Activated CD4-positive, alpha-beta T cell treated with anti-CD3 and anti-CD28 coated beads, Interleukin-2, amount 10 ng/mL, durations not matched to agents 24 days and 14 days (primary cell): ENCODE measurements at regions of chr4 and their contacts with region 1.

Region 1: DNA sequence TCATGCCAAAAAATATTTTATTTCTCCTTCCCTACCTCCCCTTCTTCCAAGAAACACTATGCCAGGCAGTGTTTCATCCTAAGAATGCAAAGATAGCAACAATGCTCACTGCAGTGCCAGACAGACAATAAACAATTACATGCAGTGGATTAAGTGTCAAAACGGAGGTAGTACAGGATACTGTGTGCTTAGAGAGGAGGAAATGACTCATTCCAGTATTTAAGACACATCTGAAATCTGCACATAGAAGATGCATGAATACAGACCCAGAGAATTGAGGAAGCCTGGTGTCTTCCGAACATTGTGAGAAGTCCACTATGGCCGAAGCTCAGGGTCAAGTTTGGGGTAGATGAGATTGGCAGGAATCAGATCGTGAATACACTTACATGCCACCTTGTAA is 326.4 kb downstream of the PPP3CA start:
- DNase-seq: peak; percentile 77
- H3K4me3 Mint-ChIP-seq: peak overlapping the region; percentile 66
- H3K27ac Mint-ChIP-seq: peak overlapping the region; percentile 82
- H3K4me1 Mint-ChIP-seq: peaks cover 42% of the 10 kb centered on the region
- H3K27me3 Mint-ChIP-seq: no peaks in the 10 kb centered on the region

Region 2: DNA sequence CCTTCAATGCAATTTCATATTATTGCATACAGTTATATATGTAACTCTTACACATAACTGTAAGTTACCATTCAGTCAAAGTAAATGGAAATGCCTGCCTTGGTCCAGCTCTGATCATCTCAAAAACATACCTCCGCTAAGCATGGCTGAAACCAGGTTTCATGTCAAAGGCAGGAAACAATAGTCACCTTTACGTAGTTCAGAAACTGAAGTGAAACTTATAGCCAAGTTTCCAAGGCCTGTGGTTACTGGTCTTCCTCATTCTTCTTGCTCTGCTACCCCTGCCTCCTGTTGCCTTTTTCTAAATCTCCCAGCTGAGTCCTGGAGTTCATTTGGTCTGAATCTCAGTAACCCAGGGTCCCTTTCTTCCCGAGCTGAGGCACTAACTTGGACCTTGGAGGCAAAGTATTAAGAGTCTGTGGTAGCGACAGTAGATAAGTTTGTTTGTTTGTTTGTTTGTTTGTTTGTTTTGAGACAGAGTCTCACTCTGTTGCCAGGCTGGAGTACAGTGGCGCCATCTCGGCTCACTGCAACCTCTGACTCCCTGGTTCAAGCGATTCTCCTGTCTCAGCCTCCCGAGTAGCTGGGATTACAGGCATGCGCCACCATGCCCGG is 1173.5 kb before region 1 on chr4:
- intact Hi-C with region 1: loop called (anchors 5 kb)
- DNase-seq: peak; percentile 84
- H3K4me3 Mint-ChIP-seq: peak overlapping the region; percentile 58
- H3K27ac Mint-ChIP-seq: peak overlapping the region; percentile 92
- H3K4me1 Mint-ChIP-seq: peaks cover 67% of the 10 kb centered on the region
- H3K27me3 Mint-ChIP-seq: no peaks in the 10 kb centered on the region

Region 3: GRCh38 chr4:100823066-100823992 is 197.6 kb before region 1 on chr4:
- intact Hi-C with region 1: loop called (anchors 5 kb)
- DNase-seq: peak; percentile 65
- H3K4me3 Mint-ChIP-seq: no peak overlapping the region
- H3K27ac Mint-ChIP-seq: peak overlapping the region; percentile 86
- H3K4me1 Mint-ChIP-seq: peaks cover 19% of the 10 kb centered on the region
- H3K27me3 Mint-ChIP-seq: no peaks in the 10 kb centered on the region

Region 4: GRCh38 chr4:101103381-101104142 is 82.6 kb after region 1 on chr4:
- intact Hi-C with region 1: loop called (anchors 1 kb)
- DNase-seq: peak; percentile 58
- H3K4me3 Mint-ChIP-seq: no peak overlapping the region
- H3K27ac Mint-ChIP-seq: peak overlapping the region; percentile 45
- H3K4me1 Mint-ChIP-seq: peaks cover 21% of the 10 kb centered on the region
- H3K27me3 Mint-ChIP-seq: no peaks in the 10 kb centered on the region

Region 5: GRCh38 chr4:101205916-101206315 is 185.0 kb after region 1 on chr4:
- intact Hi-C with region 1: loop called (anchors 5 kb)
- DNase-seq: peak; percentile 86
- H3K4me3 Mint-ChIP-seq: peak overlapping the region; percentile 13
- H3K27ac Mint-ChIP-seq: peak overlapping the region; percentile 50
- H3K4me1 Mint-ChIP-seq: peaks cover 23% of the 10 kb centered on the region
- H3K27me3 Mint-ChIP-seq: peaks cover 3% of the 10 kb centered on the region

Region 6: DNA sequence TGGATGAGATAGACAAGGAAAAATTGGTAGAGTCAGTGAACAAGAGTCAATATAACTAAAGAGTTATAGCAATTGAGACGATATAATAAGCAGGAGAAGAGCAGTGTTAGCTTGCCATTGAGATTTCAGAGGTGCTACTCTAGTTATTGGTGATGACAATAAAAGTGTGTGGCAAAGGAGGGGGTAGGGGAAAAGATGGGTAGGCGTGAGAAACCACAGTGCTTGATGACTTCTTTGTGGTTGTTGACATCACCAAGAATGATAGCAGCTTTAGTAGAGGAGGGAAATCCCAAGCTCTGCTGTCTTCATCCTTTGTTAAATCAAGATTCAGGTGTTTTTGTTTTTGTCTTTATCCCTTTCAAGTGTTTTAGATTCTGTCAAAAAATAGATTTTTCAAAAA is 506.2 kb after region 1 on chr4:
- intact Hi-C with region 1: loop called (anchors 5 kb)
- DNase-seq: peak; percentile 87
- H3K4me3 Mint-ChIP-seq: peak overlapping the region; percentile 45
- H3K27ac Mint-ChIP-seq: peak overlapping the region; percentile 64
- H3K4me1 Mint-ChIP-seq: peaks cover 15% of the 10 kb centered on the region
- H3K27me3 Mint-ChIP-seq: peaks cover 46% of the 10 kb centered on the region